Right ventricle myocardium inferior (tissue), 1 donor: ENCODE measurements at regions of chr13 and their contacts with region 1.

Region 1: DNA sequence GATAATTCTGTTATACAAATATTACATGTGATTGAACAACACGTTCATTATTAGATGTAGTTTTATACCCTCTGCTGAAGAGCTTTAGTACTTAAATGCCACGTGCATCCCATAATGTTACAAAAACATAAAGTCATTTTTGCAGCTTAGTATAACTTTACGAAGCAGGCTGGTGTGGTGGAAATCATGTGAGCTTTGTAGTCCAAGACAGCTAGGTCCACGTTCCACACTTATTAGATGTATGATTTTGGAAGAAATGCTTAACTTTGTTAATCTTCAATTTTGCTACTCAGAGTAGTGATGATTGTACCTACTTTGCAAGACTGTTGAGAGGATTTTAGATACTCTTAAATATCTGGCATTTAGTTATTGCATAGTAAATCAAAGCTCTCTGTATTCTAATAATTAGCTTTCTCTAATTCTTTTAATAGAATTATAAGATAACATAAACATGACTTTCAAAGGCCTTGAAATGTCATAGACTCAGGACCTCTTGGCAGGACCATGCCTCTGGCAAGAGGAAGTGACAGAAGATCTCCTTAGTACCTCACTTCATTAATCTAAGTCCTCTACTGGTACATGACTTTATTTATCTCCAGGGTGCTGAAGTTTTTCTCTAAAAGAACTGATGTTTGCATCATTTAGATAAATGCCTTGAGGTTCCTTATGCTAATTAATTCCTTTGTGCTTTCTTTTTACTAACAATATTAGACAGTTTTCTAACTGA is 153.7 kb downstream of the PCDH20 start:
- DNase-seq: no peak
- ATAC-seq: no peak

Region 2: DNA sequence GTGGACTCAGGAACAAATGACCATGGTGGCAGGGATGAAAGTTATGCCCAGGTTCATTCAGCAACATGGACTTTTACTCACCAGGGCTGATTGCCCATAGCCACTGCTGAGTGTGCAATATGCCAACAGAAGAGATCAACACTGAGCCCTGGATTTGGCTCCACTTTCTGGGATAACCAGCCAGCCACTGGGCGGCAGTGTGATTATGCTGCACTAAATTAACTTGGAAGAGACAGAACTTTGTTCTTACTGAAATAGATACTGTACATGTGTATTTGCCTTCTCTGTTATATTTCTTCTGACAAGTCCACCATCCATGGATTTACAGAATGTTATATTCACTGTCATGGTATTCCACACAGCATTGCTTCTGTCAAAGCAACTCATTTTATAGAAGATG is 607.5 kb before region 1 on chr13:
- intact Hi-C with region 1: loop called (anchors 5 kb)
- DNase-seq: peak; percentile 69
- ATAC-seq: peak; percentile 79

Region 3: GRCh38 chr13:61247149-61247936 is 14.6 kb before region 1 on chr13:
- intact Hi-C with region 1: no loop called
- DNase-seq: peak; percentile 40
- ATAC-seq: no peak

Region 4: GRCh38 chr13:61874970-61875579 is 613.2 kb after region 1 on chr13:
- intact Hi-C with region 1: no loop called
- DNase-seq: no peak
- ATAC-seq: no peak